MCF 10A (cell line): ENCODE measurements at regions of chr1 and their contacts with region 1.

Region 1: GRCh38 chr1:211133836-211134669 is at the start of gene KCNH1:
- DNase-seq: peak; percentile 81
- H3K4me3 Mint-ChIP-seq: peak within 1 kb of the TSS; percentile 43
- H3K27ac Mint-ChIP-seq: no peak within 1 kb of the TSS
- H3K4me1 Mint-ChIP-seq: no peaks in the 10 kb centered on the region
- H3K27me3 Mint-ChIP-seq: peaks cover 55% of the 10 kb centered on the region
- CTCF ChIP-seq: peak; percentile 100
- total RNA-seq, gene KCNH1: 0.17 and 0.19 TPM in 2 replicates

Region 2: GRCh38 chr1:210415846-210416448 is 718.1 kb before region 1 on chr1:
- CTCF ChIA-PET with region 1: interaction called, 159 read pairs
- POLR2A ChIA-PET with region 1: no interaction called
- intact Hi-C with region 1: no loop called
- DNase-seq: no peak
- H3K4me3 Mint-ChIP-seq: no peak overlapping the region
- H3K27ac Mint-ChIP-seq: no peak overlapping the region
- H3K4me1 Mint-ChIP-seq: no peaks in the 10 kb centered on the region
- H3K27me3 Mint-ChIP-seq: no peaks in the 10 kb centered on the region
- CTCF ChIP-seq: no peak

Region 3: GRCh38 chr1:210477381-210477783 is 656.7 kb before region 1 on chr1:
- CTCF ChIA-PET with region 1: interaction called, 4 read pairs
- POLR2A ChIA-PET with region 1: interaction called, 3 read pairs
- intact Hi-C with region 1: loop called (anchors 1 kb)
- DNase-seq: peak; percentile 88
- H3K4me3 Mint-ChIP-seq: no peak overlapping the region
- H3K27ac Mint-ChIP-seq: no peak overlapping the region
- H3K4me1 Mint-ChIP-seq: no peaks in the 10 kb centered on the region
- H3K27me3 Mint-ChIP-seq: peaks cover 13% of the 10 kb centered on the region
- CTCF ChIP-seq: no peak

Region 4: DNA sequence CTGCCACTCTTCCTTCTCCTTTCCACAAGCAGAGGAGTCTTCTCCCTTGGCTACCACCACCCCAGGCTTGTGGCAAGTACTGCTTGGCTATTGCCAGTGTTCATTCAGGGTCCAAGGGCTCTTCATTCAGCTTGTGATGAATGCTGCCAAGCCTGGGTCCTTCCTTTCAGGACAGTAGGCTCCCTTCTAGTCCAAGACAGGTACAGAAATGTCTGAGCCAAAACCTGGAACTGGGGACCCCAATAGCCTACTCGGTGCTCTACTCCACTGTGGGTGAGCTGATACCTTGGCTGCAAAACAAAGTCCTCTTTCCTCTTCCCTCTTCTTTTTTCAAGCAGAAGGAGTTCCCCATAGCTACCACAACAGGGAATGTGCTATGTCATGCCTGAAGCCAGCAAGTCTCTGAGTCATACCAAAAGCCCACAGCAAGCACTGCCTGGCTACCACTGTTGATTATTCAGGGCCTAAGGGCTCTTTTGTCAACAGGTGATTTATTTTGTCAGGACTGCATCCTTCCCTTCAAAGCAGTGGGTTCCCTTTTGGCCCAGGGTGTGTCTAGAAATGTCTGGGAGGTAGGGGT is 536.4 kb before region 1 on chr1:
- CTCF ChIA-PET with region 1: interaction called, 27 read pairs
- POLR2A ChIA-PET with region 1: no interaction called
- intact Hi-C with region 1: no loop called
- DNase-seq: peak; percentile 94
- H3K4me3 Mint-ChIP-seq: no peak overlapping the region
- H3K27ac Mint-ChIP-seq: peak overlapping the region; percentile 98
- H3K4me1 Mint-ChIP-seq: peaks cover 19% of the 10 kb centered on the region
- H3K27me3 Mint-ChIP-seq: no peaks in the 10 kb centered on the region
- CTCF ChIP-seq: no peak

Region 5: GRCh38 chr1:211145944-211146343 is 11.9 kb after region 1 on chr1:
- CTCF ChIA-PET with region 1: interaction called, 34 read pairs
- POLR2A ChIA-PET with region 1: interaction called, 4 read pairs
- intact Hi-C with region 1: no loop called
- DNase-seq: peak; percentile 38
- H3K4me3 Mint-ChIP-seq: no peak overlapping the region
- H3K27ac Mint-ChIP-seq: no peak overlapping the region
- H3K4me1 Mint-ChIP-seq: peaks cover 6% of the 10 kb centered on the region
- H3K27me3 Mint-ChIP-seq: peaks cover 4% of the 10 kb centered on the region
- CTCF ChIP-seq: no peak

Region 6: GRCh38 chr1:211501711-211502400 is 367.8 kb after region 1 on chr1:
- CTCF ChIA-PET with region 1: no interaction called
- POLR2A ChIA-PET with region 1: no interaction called
- intact Hi-C with region 1: no loop called
- DNase-seq: no peak
- H3K4me3 Mint-ChIP-seq: no peak overlapping the region
- H3K27ac Mint-ChIP-seq: no peak overlapping the region
- H3K4me1 Mint-ChIP-seq: no peaks in the 10 kb centered on the region
- H3K27me3 Mint-ChIP-seq: no peaks in the 10 kb centered on the region
- CTCF ChIP-seq: no peak

Region 7: DNA sequence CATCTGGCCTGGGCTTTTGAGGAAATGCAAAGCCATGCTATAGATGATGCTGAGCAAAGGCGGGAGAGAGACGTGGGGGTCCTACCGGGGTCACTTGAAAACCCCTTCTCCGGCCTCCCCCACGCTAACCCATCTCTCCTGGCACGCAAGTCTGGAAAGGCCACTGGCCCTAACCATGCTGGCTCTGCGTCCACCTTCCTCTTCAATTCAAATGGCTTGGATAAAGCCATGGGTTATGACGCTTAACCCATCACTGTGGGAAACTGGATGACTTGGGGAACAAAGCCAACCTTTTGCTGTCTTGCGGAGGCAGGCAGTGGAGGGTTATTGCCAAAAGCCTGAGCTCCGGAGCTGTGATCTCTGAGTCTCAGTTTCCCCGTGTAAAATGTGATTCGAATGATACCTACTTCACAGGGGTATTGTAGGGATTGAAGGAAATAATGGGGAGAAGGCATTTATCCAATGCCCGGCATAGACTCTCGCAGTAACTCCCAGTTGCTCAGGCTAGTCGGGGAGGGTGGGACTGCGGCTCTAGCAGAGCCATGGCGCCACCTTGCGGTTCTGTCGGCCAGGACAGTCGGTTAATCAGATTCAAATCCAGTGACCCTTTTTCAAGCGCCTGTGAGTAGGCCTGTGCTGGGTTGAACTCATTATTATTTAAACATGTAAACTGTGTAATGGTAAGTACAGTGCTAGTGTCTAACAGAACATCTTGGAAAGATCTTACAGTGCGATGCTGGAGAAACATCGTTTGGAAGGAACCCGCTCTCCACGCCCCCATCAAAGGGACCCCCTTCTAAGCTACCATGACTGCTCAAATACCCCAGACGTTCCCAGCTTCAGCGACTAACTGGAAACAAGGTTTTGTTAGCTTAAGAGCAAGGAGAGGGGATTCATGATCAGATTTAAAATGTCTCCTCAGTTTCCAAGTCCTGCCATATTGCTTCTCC is 521.1 kb after region 1 on chr1:
- CTCF ChIA-PET with region 1: no interaction called
- POLR2A ChIA-PET with region 1: no interaction called
- intact Hi-C with region 1: loop called (anchors 1 kb)
- DNase-seq: peak; percentile 95
- H3K4me3 Mint-ChIP-seq: no peak overlapping the region
- H3K27ac Mint-ChIP-seq: no peak overlapping the region
- H3K4me1 Mint-ChIP-seq: peaks cover 26% of the 10 kb centered on the region
- H3K27me3 Mint-ChIP-seq: no peaks in the 10 kb centered on the region
- CTCF ChIP-seq: peak; percentile 100